ENCODE measurements at regions of chr19 and their contacts with region 1.

Region 1: GRCh38 chr19:46753420-46754155 is 7.3 kb upstream of the STRN4 start:
- DNase-seq: peak; percentile 67
- H3K4me3 Mint-ChIP-seq: no peak overlapping the region
- H3K27ac Mint-ChIP-seq: no peak overlapping the region
- H3K4me1 Mint-ChIP-seq: peaks cover 5% of the 10 kb centered on the region
- H3K27me3 Mint-ChIP-seq: no peaks in the 10 kb centered on the region

Region 2: DNA sequence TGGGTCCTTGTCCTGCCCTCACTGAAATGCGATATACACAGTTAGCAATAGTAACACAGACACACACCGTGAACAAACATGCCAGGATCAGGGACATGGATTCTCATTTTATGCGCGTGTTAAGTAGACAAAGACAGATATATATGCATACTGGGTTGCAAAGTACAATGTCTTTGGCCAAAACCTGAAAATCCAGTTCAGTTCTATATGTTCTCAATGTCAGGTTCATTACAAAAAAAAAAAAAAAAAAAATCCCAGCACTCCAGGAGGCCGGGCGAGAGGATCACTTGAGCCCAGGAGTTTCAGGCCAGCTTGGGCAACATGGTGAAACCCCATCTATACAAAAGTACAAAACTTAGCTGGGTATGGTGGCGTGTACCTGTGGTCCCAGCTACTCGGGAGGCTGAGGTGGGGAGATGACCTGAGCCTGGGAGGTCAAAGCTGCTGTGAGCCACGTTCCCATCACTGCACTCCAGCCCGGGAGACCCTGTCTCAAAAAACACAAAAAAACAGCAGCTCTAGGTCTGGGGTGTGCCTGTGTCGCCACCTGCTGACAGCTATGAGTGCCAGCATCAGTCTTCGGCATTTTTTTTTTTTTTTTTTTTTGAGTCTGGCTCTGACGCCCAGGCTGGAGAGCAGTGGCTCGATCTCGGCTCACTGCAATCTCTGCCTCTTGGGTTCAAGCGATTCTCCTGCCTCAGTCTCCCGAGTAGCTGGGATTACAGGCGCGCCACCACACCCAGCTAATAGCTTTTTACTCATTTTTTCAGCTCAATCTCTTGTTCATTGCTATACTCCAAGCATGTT is 86.8 kb after region 1 on chr19:
- intact Hi-C with region 1: loop called (anchors 1 kb)
- DNase-seq: peak; percentile 43
- H3K4me3 Mint-ChIP-seq: no peak overlapping the region
- H3K27ac Mint-ChIP-seq: no peak overlapping the region
- H3K4me1 Mint-ChIP-seq: no peaks in the 10 kb centered on the region
- H3K27me3 Mint-ChIP-seq: no peaks in the 10 kb centered on the region